ENCODE measurements at regions of chr19 and their contacts with region 1.

Region 1: DNA sequence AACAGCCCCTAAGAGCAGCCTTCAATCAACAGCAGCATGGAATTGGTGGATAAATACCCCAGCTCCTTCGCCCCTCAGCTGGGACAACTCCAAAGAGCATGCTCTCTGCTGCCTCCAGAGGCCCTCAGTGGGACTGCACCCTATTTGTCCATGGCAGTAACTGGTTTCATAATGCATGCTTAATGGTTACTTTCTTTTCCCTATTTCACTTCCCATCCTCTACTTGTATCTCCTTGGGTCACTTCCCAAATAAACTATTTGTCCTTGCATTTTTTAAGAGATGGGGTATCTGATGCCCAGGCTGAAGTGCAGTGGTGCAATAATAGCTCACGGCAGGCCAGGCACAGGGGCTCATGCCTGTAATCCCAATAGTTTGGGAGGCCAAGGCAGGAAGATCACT is 13.5 kb upstream of the TPM4 start:
- DNase-seq: peak; percentile 71
- H3K4me3 ChIP-seq: no peak overlapping the region
- H3K27ac ChIP-seq: no peak overlapping the region
- H3K4me1 ChIP-seq: peaks cover 10% of the 10 kb centered on the region
- H3K27me3 ChIP-seq: no peaks in the 10 kb centered on the region
- CTCF ChIP-seq: peak; percentile 52 to 87 (median 77)
- POLR2A ChIP-seq: no peak

Region 2: GRCh38 chr19:16111160-16111908 is 48.5 kb after region 1 on chr19 and contains the start of gene RAB8A:
- intact Hi-C with region 1: loop called (anchors 10 kb)
- DNase-seq: peak; percentile 99
- H3K4me3 ChIP-seq: peak within 1 kb of the TSS; percentile 71 to 96
- H3K27ac ChIP-seq: peak within 1 kb of the TSS; percentile 85 to 97
- H3K4me1 ChIP-seq: peaks cover 16% of the 10 kb centered on the region
- H3K27me3 ChIP-seq: no peaks in the 10 kb centered on the region
- CTCF ChIP-seq: peak; percentile 95 to 99 (median 98)
- POLR2A ChIP-seq: no peak
- total RNA-seq, gene RAB8A: 63.3 to 69.0 TPM

Region 3: DNA sequence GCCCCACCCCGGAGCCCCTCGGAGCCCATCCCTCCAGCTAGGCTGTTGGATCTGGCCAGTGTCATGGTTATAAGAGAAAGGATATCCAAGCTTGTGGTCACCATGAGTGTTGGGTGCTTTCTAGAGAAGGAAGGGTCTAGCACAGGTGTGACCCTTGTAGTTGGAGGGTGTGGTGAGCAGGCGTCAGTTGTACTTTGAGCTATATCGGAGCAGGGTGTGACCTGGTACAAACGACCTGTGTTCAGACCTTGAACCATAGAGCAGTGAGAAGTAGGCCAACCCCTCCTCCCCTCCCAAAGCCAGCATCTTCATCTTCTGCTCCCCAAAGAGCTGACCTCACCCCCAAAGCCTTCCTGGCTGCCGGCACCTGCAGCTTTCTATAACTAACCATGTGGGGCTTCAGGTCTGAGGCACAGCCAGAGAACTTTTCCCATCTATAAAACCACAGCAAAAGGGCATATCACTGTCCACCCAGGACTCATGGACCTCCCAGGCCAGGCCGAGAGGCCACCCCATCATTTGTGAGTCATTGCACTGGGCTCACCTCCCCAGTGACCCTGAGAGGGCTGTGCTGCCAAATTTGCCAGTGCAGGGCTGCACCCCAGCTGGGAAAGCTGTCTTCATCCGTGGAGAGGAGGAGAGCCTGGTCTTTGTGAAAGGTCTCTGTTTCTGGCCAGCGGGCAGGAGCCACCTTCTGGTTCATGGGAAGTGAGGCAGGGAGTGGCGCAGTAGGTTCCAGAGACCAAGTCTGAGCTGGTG is 63.1 kb after region 1 on chr19:
- intact Hi-C with region 1: no loop called
- DNase-seq: no peak
- H3K4me3 ChIP-seq: no peak overlapping the region
- H3K27ac ChIP-seq: no peak overlapping the region
- H3K4me1 ChIP-seq: no peaks in the 10 kb centered on the region
- H3K27me3 ChIP-seq: no peaks in the 10 kb centered on the region
- CTCF ChIP-seq: no peak
- POLR2A ChIP-seq: no peak

Measured in testis (tissue), 5 donors.